Activated CD4-positive, alpha-beta memory T cell treated with anti-CD3 and anti-CD28 coated beads for 36 hours (primary cell): ENCODE measurements at regions of chr17 and their contacts with region 1.

Region 1: DNA sequence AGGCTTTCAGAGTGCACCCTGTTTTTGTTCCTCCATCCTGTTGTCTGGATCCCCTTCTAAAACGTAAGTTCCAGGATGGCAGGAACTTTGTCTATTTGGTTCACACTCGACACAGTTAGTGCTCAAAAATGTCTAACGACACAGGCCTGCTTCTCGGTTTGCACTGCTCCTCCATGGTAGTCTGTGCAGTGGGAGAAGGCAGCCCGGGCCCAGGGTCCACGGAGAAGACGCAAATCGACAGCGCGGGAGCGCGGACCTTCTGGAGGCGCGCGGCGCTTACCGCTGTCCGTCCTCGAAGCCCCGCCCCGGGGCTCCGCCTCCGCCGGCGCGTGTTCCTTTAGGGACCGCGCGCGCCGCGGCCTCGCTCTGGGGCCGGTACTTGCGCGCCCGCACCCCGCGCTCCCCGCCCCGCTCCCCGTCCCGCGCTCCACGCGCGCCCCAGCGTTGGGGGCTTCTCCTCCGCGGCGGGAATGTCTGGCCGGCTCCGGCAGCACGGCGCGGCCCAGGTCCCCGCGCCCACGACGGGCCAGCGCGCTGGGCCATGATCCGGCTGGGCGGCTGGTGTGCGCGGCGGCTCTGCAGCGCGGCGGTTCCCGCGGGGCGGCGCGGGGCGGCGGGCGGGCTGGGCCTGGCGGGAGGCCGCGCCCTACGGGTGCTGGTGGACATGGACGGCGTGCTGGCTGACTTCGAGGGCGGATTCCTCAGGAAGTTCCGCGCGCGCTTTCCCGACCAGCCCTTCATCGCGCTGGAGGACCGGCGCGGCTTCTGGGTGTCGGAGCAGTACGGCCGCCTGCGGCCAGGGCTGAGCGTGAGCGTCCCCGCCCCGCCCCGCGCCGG is at the start of gene NT5M:
- DNase-seq: peak; percentile 83
- H3K4me3 Mint-ChIP-seq: peak within 1 kb of the TSS; percentile 84
- H3K27ac Mint-ChIP-seq: peak within 1 kb of the TSS; percentile 75
- H3K4me1 Mint-ChIP-seq: peaks cover 32% of the 10 kb centered on the region
- H3K27me3 Mint-ChIP-seq: no peaks in the 10 kb centered on the region
- total RNA-seq, gene NT5M: 8.5 to 9.3 TPM

Region 2: DNA sequence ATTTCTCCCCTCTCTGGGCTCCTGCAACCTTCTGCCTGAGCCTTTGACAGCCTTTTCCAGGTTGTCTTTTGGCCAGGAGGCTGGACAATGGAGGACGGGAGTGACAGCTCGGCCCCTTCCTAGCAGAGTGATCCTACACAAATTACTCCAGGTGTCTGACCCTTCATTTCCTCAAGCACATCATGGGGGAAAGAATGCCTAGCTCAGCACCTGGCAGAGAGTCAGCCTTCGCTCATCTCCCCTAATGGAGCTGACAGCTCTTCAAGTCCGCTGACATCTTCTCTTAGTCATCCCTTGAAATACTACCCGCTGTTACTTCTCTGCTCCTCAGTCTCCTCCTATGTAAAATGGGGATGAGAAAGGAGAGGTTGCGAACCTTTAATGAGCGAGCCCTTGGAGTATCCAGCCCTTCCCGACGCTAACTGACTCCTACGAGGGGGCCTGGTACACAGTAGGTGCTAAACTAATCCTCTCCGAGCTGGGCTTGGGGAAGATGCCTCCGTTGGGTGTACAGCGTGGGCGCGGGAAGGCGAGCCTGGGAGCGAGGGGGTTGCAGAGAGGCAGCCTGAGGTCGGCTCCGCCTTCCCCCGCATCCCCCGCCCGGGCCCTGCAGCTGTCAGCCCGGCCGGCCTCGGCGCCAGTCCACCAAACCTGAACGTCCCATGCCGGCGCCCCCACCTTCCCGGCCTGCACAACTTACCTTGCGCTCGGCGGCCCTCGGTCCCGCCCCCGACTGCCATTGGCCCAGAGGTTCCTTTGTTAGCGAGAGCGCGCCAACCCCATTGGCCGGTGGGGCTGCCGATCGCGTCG is 261.5 kb before region 1 on chr17:
- CTCF ChIA-PET with region 1: no interaction called
- POLR2A ChIA-PET with region 1: no interaction called
- intact Hi-C with region 1: loop called (anchors 2 kb)
- DNase-seq: peak; percentile 98
- H3K4me3 Mint-ChIP-seq: peak overlapping the region; percentile 70
- H3K27ac Mint-ChIP-seq: peak overlapping the region; percentile 9
- H3K4me1 Mint-ChIP-seq: peaks cover 38% of the 10 kb centered on the region
- H3K27me3 Mint-ChIP-seq: no peaks in the 10 kb centered on the region

Region 3: GRCh38 chr17:17179371-17179827 is 123.8 kb before region 1 on chr17:
- CTCF ChIA-PET with region 1: interaction called, 3 read pairs
- POLR2A ChIA-PET with region 1: no interaction called
- intact Hi-C with region 1: loop called (anchors 2 kb)
- DNase-seq: peak; percentile 37
- H3K4me3 Mint-ChIP-seq: peak overlapping the region; percentile 63
- H3K27ac Mint-ChIP-seq: peak overlapping the region; percentile 95
- H3K4me1 Mint-ChIP-seq: peaks cover 83% of the 10 kb centered on the region
- H3K27me3 Mint-ChIP-seq: no peaks in the 10 kb centered on the region

Region 4: GRCh38 chr17:17280613-17281549 is 22.3 kb before region 1 on chr17 and contains the start of gene COPS3:
- CTCF ChIA-PET with region 1: interaction called, 3 read pairs
- POLR2A ChIA-PET with region 1: interaction called, 4 read pairs
- intact Hi-C with region 1: loop called (anchors 1 kb)
- DNase-seq: peak; percentile 98
- H3K4me3 Mint-ChIP-seq: peak within 1 kb of the TSS; percentile 87
- H3K27ac Mint-ChIP-seq: peak within 1 kb of the TSS; percentile 83
- H3K4me1 Mint-ChIP-seq: peaks cover 31% of the 10 kb centered on the region
- H3K27me3 Mint-ChIP-seq: no peaks in the 10 kb centered on the region
- total RNA-seq, gene COPS3: 96.1 to 104 TPM

Region 5: GRCh38 chr17:17641621-17642409 is 338.6 kb after region 1 on chr17:
- CTCF ChIA-PET with region 1: no interaction called
- POLR2A ChIA-PET with region 1: no interaction called
- intact Hi-C with region 1: no loop called
- DNase-seq: peak; percentile 86
- H3K4me3 Mint-ChIP-seq: no peak overlapping the region
- H3K27ac Mint-ChIP-seq: no peak overlapping the region
- H3K4me1 Mint-ChIP-seq: no peaks in the 10 kb centered on the region
- H3K27me3 Mint-ChIP-seq: peaks cover 5% of the 10 kb centered on the region